ENCODE measurements at regions of chr6 and their contacts with region 1.

Region 1: GRCh38 chr6:45830441-45831139 is 185.1 kb downstream of the CLIC5 start:
- DNase-seq: no peak
- H3K4me3 ChIP-seq: no peak overlapping the region
- H3K27ac ChIP-seq: no peak overlapping the region
- H3K4me1 ChIP-seq: no peaks in the 10 kb centered on the region; the same call in 1 of the 2 replicates
- H3K27me3 ChIP-seq: no peaks in the 10 kb centered on the region
- CTCF ChIP-seq: no peak

Region 2: GRCh38 chr6:45843848-45844521 is 13.4 kb after region 1 on chr6:
- CTCF ChIA-PET with region 1: interaction called, 17 read pairs
- POLR2A ChIA-PET with region 1: no interaction called
- intact Hi-C with region 1: no loop called
- DNase-seq: no peak
- H3K4me3 ChIP-seq: no peak overlapping the region
- H3K27ac ChIP-seq: no peak overlapping the region
- H3K4me1 ChIP-seq: peaks cover 11% of the 10 kb centered on the region; the same call in 1 of the 2 replicates
- H3K27me3 ChIP-seq: no peaks in the 10 kb centered on the region
- CTCF ChIP-seq: no peak

Measured in PC-9 (cell line).